CD8-positive, alpha-beta T cell (primary cell): ENCODE measurements at regions of chr1 and their contacts with region 1.

Region 1: DNA sequence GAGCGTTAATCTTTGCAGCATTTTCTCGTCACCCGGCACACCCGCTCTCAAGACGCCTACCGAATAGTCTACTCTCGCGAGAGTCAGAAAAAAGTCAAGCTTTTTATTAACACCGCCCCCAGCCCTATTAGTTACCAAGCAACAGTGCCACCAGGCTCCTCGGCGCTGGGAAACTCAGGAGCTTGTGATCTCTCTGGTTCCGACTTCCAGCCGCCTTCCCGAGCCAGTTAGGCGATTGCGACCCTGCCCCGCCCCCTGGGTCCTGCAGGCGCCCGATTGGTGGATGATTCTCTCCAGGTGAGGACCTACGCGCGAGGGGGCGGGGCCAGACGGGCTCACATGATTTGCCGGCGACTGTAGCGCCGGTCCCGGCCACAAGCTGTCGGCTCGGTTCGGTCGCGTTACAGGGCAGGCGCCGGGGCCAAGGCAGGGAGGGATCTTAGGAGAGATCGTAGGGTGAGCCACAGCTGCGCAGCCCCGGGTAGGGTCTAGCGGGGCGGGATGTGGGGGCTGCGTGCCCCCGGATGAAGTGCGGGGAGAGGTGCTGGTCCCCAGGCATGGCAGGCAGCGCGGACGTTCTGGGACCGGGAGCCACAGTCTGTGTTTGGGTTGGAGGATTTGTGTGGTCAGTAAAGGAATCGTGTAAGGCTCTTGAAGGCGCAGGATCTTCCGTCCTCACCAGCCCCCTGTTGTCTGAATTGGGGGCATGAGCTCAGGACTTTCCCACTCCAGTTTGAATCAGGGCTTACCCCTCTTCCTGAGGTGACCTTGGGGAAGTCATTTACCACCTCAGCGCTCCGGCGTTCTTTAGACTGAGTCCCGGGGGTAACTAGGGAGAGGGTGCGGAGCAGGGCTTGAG is at the start of gene PFKFB2:
- DNase-seq: peak; percentile 88 to 97 (median 95)
- ATAC-seq: peak; percentile 87
- H3K4me3 ChIP-seq: peak within 1 kb of the TSS; percentile 70 to 82
- H3K4me3 Mint-ChIP-seq: peak within 1 kb of the TSS; percentile 97
- H3K27ac ChIP-seq: peak within 1 kb of the TSS; percentile 70 to 83
- H3K27ac Mint-ChIP-seq: peak within 1 kb of the TSS; percentile 98
- H3K4me1 ChIP-seq: peaks cover 28% of the 10 kb centered on the region
- H3K4me1 Mint-ChIP-seq: peaks cover 44% of the 10 kb centered on the region
- H3K27me3 ChIP-seq: no peaks in the 10 kb centered on the region
- H3K27me3 Mint-ChIP-seq: no peaks in the 10 kb centered on the region
- CTCF ChIP-seq: peak; percentile 21
- total RNA-seq, gene PFKFB2: 8.1 to 8.5 TPM

Region 2: GRCh38 chr1:207039380-207040180 is 13.6 kb before region 1 on chr1:
- CTCF ChIA-PET with region 1: interaction called, 10 read pairs
- POLR2A ChIA-PET with region 1: interaction called, 3 read pairs
- intact Hi-C with region 1: no loop called
- DNase-seq: no peak
- ATAC-seq: no peak
- H3K4me3 ChIP-seq: no peak overlapping the region
- H3K4me3 Mint-ChIP-seq: no peak overlapping the region
- H3K27ac ChIP-seq: no peak overlapping the region
- H3K27ac Mint-ChIP-seq: no peak overlapping the region
- H3K4me1 ChIP-seq: peaks cover 6% of the 10 kb centered on the region
- H3K4me1 Mint-ChIP-seq: peaks cover 19% of the 10 kb centered on the region
- H3K27me3 ChIP-seq: no peaks in the 10 kb centered on the region
- H3K27me3 Mint-ChIP-seq: no peaks in the 10 kb centered on the region
- CTCF ChIP-seq: no peak

Region 3: DNA sequence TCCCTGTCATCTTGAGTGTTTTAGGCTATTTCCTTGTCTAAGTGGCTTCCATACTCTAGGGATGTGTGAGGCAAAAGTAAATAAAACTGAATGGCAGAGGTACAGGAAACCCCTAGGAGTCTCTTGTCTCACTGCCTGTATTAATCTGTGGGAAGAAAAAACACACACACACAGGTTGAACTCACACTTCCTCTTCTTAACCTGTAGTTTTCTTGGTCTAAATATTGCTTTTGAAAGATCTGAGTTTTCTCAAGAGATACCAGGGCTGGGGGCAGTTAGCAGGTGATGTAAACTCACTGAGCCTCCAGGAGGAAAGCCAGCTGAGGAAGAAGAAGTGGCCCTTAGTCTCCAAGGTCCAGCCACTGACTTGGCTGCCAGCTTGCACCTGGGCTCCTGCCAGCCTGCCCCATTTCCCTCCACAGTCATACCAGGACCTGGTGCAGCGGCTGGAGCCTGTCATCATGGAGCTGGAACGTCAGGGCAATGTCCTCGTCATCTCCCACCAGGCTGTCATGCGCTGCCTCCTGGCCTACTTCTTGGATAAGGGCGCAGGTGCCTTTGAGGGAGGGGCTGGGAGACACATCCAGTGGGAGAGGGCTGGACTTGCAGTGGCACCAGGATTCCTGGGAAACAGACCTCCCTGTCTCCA is 16.8 kb after region 1 on chr1:
- CTCF ChIA-PET with region 1: interaction called, 90 read pairs
- POLR2A ChIA-PET with region 1: interaction called, 13 read pairs
- intact Hi-C with region 1: no loop called
- DNase-seq: no peak
- ATAC-seq: no peak
- H3K4me3 ChIP-seq: no peak overlapping the region
- H3K4me3 Mint-ChIP-seq: no peak overlapping the region
- H3K27ac ChIP-seq: peak overlapping the region in 1 of 2 experiments; percentile 12
- H3K27ac Mint-ChIP-seq: peak overlapping the region; percentile 87
- H3K4me1 ChIP-seq: peaks cover 36% of the 10 kb centered on the region
- H3K4me1 Mint-ChIP-seq: peaks cover 40% of the 10 kb centered on the region
- H3K27me3 ChIP-seq: no peaks in the 10 kb centered on the region
- H3K27me3 Mint-ChIP-seq: no peaks in the 10 kb centered on the region
- CTCF ChIP-seq: no peak

Region 4: GRCh38 chr1:207619871-207620542 is 566.9 kb after region 1 on chr1:
- CTCF ChIA-PET with region 1: no interaction called
- POLR2A ChIA-PET with region 1: no interaction called
- intact Hi-C with region 1: no loop called
- DNase-seq: peak in 2 of 9 experiments; percentile 39 to 53
- ATAC-seq: peak; percentile 96
- H3K4me3 ChIP-seq: no peak overlapping the region
- H3K4me3 Mint-ChIP-seq: no peak overlapping the region
- H3K27ac ChIP-seq: no peak overlapping the region
- H3K27ac Mint-ChIP-seq: no peak overlapping the region
- H3K4me1 ChIP-seq: no peaks in the 10 kb centered on the region
- H3K4me1 Mint-ChIP-seq: peaks cover 4% of the 10 kb centered on the region
- H3K27me3 ChIP-seq: no peaks in the 10 kb centered on the region
- H3K27me3 Mint-ChIP-seq: no peaks in the 10 kb centered on the region
- CTCF ChIP-seq: peak; percentile 82